Mammary epithelial cell (primary cell): ENCODE measurements at regions of chr18 and their contacts with region 1.

Region 1: GRCh38 chr18:48037481-48038271 is 107.2 kb upstream of the SMAD2 start:
- DNase-seq: peak; percentile 24
- H3K4me3 ChIP-seq: no peak overlapping the region
- H3K27ac ChIP-seq: no peak overlapping the region
- H3K4me1 ChIP-seq: peaks cover 29% of the 10 kb centered on the region
- H3K27me3 ChIP-seq: no peaks in the 10 kb centered on the region
- CTCF ChIP-seq: peak; percentile 49 to 66

Region 2: GRCh38 chr18:48345596-48345995 is 307.9 kb after region 1 on chr18:
- CTCF ChIA-PET with region 1: no interaction called
- dilution Hi-C with region 1: no loop called
- in situ Hi-C with region 1: loop called (anchors 5 to 10 kb)
- intact Hi-C with region 1: no loop called
- DNase-seq: no peak
- H3K4me3 ChIP-seq: no peak overlapping the region
- H3K27ac ChIP-seq: no peak overlapping the region
- H3K4me1 ChIP-seq: peaks cover 11% of the 10 kb centered on the region
- H3K27me3 ChIP-seq: no peaks in the 10 kb centered on the region
- CTCF ChIP-seq: peak; percentile 45 to 67

Region 3: GRCh38 chr18:48410095-48410920 is 372.6 kb after region 1 on chr18:
- CTCF ChIA-PET with region 1: no interaction called
- dilution Hi-C with region 1: no loop called
- in situ Hi-C with region 1: no loop called
- intact Hi-C with region 1: loop called (anchors 1 kb)
- DNase-seq: peak; percentile 93
- H3K4me3 ChIP-seq: peak overlapping the region; percentile 75 to 84 (median 82)
- H3K27ac ChIP-seq: peak overlapping the region; percentile 52
- H3K4me1 ChIP-seq: peaks cover 31% of the 10 kb centered on the region
- H3K27me3 ChIP-seq: no peaks in the 10 kb centered on the region
- CTCF ChIP-seq: peak; percentile 20 to 24

Region 4: DNA sequence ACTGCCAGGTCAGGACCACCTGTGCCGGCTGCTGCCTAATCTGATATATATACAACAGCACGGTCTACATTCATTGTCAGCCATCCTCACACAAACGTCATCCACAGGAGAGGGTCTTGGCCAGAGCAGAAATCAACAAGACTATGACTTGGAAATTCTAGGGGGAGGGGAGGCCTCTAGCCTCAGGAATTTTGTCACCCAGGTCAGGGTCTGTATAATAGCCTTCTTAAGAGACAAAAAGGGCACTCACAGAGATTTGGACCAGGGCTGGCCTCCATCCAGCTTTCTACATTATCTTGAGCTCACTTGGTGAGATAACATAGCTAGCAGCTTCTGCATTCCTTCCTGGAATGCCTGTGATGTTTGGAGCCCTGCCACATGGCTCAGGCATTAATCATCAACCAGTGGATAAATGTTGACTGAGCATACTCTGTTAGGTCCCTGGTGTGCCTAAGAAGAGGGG is 450.7 kb after region 1 on chr18:
- CTCF ChIA-PET with region 1: interaction called, 13 read pairs
- dilution Hi-C with region 1: no loop called
- in situ Hi-C with region 1: no loop called
- intact Hi-C with region 1: no loop called
- DNase-seq: peak; percentile 73
- H3K4me3 ChIP-seq: no peak overlapping the region
- H3K27ac ChIP-seq: no peak overlapping the region
- H3K4me1 ChIP-seq: peaks cover 16% of the 10 kb centered on the region
- H3K27me3 ChIP-seq: no peaks in the 10 kb centered on the region
- CTCF ChIP-seq: no peak

Region 5: DNA sequence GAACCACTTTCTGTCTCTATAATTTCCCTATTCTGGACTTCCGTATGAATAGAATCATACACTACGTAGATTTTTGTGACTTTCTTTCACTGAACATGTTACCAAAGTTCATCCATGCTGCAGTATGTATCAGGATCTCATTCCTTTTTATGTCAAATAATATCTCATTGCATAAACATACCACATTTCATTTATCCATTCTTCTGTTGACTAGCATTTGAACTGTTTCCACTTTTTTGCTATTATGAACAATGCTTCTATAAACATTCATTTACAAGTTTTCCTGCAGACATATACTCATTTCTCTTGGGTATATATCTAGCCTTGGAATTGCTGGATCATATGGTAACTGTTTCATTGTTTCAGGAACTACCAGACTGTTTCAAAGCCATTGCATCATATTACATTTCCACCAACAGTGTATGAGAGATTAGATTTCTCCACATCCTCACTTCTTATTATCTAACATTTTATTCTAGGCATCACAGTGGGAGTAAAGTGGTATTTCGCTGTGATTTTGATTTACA is 1236.6 kb after region 1 on chr18:
- CTCF ChIA-PET with region 1: no interaction called
- dilution Hi-C with region 1: no loop called
- in situ Hi-C with region 1: no loop called
- intact Hi-C with region 1: no loop called
- DNase-seq: no peak
- H3K4me3 ChIP-seq: no peak overlapping the region
- H3K27ac ChIP-seq: no peak overlapping the region
- H3K4me1 ChIP-seq: peaks cover 10% of the 10 kb centered on the region
- H3K27me3 ChIP-seq: no peaks in the 10 kb centered on the region
- CTCF ChIP-seq: no peak